ENCODE measurements at regions of chr6 and their contacts with region 1.

Region 1: DNA sequence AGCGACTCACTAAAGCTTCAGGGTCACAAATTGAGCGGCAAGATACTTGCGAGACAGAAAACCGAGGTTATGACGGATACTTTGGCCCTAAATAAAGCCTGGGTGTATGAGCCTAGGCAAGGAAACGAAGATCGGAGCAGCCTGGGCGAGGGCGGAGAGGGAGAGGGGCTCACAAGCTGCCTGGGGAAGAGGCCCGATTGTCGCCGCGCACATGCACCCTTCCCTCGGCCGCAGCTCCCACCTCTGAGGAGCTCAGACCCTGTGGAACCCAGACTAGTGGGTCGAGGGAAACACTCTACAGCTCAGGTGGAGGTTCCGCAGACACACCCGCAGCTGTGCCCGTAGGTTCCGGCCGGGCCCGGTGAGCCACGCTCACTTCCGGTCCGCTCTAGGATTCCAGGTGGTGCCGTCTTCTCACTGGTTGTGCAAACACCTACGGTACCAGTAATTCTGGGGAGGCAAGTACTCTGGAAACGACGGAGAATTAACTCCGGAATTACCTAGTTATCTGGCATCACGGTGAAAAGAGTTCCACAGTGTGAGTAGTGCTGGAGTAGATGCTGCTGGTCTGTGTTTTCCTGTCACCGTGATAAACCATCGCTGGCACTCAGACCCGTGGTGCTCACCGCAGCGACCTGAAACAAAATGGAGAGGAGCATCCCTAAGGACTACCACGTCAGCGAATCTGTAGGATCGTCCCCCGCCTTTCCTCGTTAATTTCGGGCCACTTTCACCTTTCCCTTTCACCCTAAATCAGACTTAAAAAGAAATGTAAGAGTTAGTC is 61.5 kb downstream of the GPX5 start:
- DNase-seq: peak; percentile 83
- H3K4me3 ChIP-seq: peak overlapping the region; percentile 78 to 89 (median 84)
- H3K27ac ChIP-seq: peak overlapping the region; percentile 76
- H3K4me1 ChIP-seq: peaks cover 21% of the 10 kb centered on the region
- H3K27me3 ChIP-seq: no peaks in the 10 kb centered on the region
- CTCF ChIP-seq: no peak

Region 2: DNA sequence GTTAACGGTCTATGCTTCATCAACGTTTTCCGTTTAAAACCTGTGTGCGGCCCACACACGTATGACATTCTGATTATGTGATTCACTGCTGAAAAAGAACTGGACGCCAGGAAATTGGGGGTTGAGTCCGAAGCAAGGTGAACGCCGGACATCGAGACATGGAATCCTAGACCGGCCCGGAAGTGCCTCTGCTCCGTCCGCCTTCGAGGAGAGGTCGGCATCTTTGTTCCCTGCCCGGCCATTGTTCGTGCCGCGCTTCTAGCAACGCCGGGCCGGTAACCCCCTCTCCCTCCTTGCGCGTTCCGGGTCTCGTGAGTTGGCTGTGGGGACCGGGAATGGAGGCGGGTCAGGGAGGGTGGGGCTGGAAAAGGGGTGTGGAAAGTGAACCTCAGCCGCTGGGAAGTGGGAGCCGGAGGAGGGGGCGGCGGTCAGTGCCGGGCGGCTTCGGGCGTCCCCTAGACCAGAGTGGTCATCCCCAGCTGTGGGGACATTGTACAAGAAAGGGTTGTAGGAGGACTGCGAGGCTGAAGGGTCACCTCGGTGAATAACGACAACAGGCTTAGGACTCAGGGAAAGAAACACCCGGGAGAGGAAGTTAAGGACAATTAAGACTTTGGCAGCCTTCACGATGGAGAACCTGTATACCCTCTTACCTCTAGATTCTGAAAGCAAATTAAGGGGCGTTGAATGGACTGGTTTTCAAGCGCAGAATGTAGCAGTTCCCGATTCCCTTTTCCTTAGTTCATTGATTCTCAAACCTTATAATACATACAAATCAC is 361.9 kb before region 1 on chr6 and contains the start of gene ZSCAN9:
- CTCF ChIA-PET with region 1: no interaction called
- dilution Hi-C with region 1: no loop called
- in situ Hi-C with region 1: no loop called
- intact Hi-C with region 1: loop called (anchors 2 kb)
- DNase-seq: peak; percentile 91
- H3K4me3 ChIP-seq: peak within 1 kb of the TSS; percentile 57 to 76 (median 66)
- H3K27ac ChIP-seq: peak within 1 kb of the TSS; percentile 62
- H3K4me1 ChIP-seq: peaks cover 9% of the 10 kb centered on the region
- H3K27me3 ChIP-seq: no peaks in the 10 kb centered on the region
- CTCF ChIP-seq: no peak
- total RNA-seq, gene ZSCAN9: 11.9 to 15.5 TPM

Region 3: DNA sequence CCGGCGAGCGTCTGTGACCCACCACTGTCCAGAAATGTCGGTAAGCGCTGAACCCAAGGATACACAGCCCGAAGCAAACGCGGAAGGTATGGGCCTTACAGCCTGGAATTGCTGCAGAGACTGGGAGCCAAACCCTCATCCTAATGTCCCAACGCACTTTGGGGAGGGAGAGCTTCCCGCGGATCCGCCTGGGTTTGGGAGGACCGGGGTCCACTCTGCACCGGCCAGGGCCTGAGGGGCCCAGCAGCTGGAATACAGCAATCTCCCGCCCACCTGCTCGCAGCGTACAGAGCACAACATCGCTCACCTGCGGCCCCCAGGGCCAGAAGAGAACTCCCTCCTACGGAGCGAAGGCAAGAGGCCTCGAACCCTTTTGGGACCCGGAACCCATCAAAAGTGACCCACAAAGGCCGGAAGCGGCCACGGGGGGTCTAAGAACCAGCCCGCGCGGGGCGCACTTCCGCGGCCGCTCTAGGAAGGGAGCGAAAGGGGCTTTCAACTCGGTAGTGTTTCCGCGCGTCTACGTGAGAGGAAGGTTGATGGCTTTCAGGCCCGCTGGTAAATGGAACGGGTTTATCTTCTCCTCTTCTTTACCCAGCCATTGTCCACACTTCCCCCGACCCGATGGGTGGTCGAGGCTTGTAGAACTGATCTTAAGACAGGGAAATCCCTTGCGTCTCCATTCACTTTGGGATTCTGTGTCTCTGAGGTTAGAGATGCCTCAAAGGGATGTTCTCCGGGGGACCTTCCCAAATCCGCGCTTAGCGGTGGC is 187.6 kb before region 1 on chr6 and contains the start of gene ZSCAN12:
- CTCF ChIA-PET with region 1: no interaction called
- dilution Hi-C with region 1: no loop called
- in situ Hi-C with region 1: loop called in 1 of 2 experiments (anchors 10 kb)
- intact Hi-C with region 1: loop called (anchors 5 kb)
- DNase-seq: peak; percentile 79
- H3K4me3 ChIP-seq: peak within 1 kb of the TSS; percentile 76 to 91 (median 78)
- H3K27ac ChIP-seq: peak within 1 kb of the TSS; percentile 84
- H3K4me1 ChIP-seq: peaks cover 27% of the 10 kb centered on the region
- H3K27me3 ChIP-seq: no peaks in the 10 kb centered on the region
- CTCF ChIP-seq: peak; percentile 43 to 75
- total RNA-seq, gene ZSCAN12: 5.3 to 8.5 TPM

Region 4: GRCh38 chr6:28542440-28543296 is 44.5 kb before region 1 on chr6:
- CTCF ChIA-PET with region 1: no interaction called
- dilution Hi-C with region 1: no loop called
- in situ Hi-C with region 1: no loop called
- intact Hi-C with region 1: loop called (anchors 2 kb)
- DNase-seq: peak; percentile 95
- H3K4me3 ChIP-seq: peak overlapping the region; percentile 36 to 67 (median 42)
- H3K27ac ChIP-seq: no peak overlapping the region
- H3K4me1 ChIP-seq: peaks cover 12% of the 10 kb centered on the region
- H3K27me3 ChIP-seq: no peaks in the 10 kb centered on the region
- CTCF ChIP-seq: peak; percentile 59 to 63

Region 5: GRCh38 chr6:28606424-28607400 is 19.6 kb after region 1 on chr6:
- CTCF ChIA-PET with region 1: interaction called, 3 read pairs
- dilution Hi-C with region 1: no loop called
- in situ Hi-C with region 1: no loop called
- intact Hi-C with region 1: loop called (anchors 2 kb)
- DNase-seq: peak; percentile 75
- H3K4me3 ChIP-seq: peak overlapping the region; percentile 47 to 68 (median 51)
- H3K27ac ChIP-seq: no peak overlapping the region
- H3K4me1 ChIP-seq: peaks cover 2% of the 10 kb centered on the region
- H3K27me3 ChIP-seq: no peaks in the 10 kb centered on the region
- CTCF ChIP-seq: peak; percentile 42 to 43

Measured in mammary epithelial cell (primary cell).